ENCODE measurements at regions of chr9 and their contacts with region 1.

Region 1: GRCh38 chr9:112074250-112075008 is 100.7 kb downstream of the SUSD1 start:
- DNase-seq: peak; percentile 74 to 77 (median 75)
- H3K4me3 ChIP-seq: no peak overlapping the region
- H3K4me3 Mint-ChIP-seq: peak overlapping the region; percentile 51 to 82 (median 74)
- H3K27ac ChIP-seq: no peak overlapping the region
- H3K27ac Mint-ChIP-seq: peak overlapping the region; percentile 20 to 82 (median 46)
- H3K4me1 ChIP-seq: peaks cover 26% of the 10 kb centered on the region
- H3K4me1 Mint-ChIP-seq: peaks cover 23 to 41% (median 29%) of the 10 kb centered on the region in 4 donors
- H3K27me3 ChIP-seq: no peaks in the 10 kb centered on the region
- H3K27me3 Mint-ChIP-seq: no peaks in the 10 kb centered on the region

Region 2: DNA sequence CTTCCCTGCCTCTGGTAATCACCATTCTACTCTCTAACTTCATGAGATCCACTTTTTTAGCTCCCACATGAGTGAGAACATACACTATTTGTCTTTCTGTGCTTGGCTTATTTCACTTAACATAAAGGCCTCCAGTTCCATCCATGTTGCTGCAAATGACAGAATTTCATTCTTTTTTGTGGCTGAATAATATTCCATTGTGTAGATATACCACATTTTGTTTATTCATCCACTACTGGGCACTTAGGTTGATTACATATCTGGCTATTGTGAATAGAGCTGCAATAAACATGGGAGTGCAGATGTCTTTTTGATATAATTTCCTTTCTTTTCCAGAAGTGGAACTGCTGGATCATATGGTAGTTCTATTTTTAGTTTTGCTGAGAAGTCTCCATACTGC is 308.4 kb before region 1 on chr9:
- CTCF ChIA-PET with region 1: interaction called, 216 read pairs
- POLR2A ChIA-PET with region 1: interaction called, 7 read pairs
- intact Hi-C with region 1: no loop called
- DNase-seq: no peak
- H3K4me3 ChIP-seq: no peak overlapping the region
- H3K4me3 Mint-ChIP-seq: no peak overlapping the region
- H3K27ac ChIP-seq: no peak overlapping the region
- H3K27ac Mint-ChIP-seq: peak overlapping the region in 1 of 7 donors; percentile 25
- H3K4me1 ChIP-seq: no peaks in the 10 kb centered on the region
- H3K4me1 Mint-ChIP-seq: no peaks in the 10 kb centered on the region
- H3K27me3 ChIP-seq: no peaks in the 10 kb centered on the region
- H3K27me3 Mint-ChIP-seq: no peaks in the 10 kb centered on the region

Region 3: DNA sequence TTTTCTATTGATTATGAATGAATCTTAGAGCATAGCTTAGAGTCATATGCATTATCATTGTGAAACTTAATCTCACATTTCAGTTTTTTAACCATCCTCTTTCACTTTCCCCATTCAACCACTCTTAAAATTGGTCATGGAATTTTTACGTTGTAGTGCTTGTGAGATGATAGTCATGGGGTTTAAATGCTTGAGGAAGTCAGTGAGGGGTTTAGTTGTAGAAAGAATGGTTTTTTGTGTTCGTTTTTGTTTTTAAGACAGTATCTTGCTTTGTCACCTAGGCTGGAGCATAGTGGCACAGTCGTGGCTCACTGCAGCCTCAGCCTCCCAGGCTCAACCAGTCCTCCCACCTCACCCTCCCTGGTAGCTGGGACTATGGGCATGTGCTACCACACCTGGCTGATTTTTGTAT is 158.2 kb before region 1 on chr9:
- CTCF ChIA-PET with region 1: interaction called, 12 read pairs
- POLR2A ChIA-PET with region 1: no interaction called
- intact Hi-C with region 1: no loop called
- DNase-seq: no peak
- H3K4me3 ChIP-seq: no peak overlapping the region
- H3K4me3 Mint-ChIP-seq: peak overlapping the region in 7 of 8 donors; percentile 60 to 84 (median 77)
- H3K27ac ChIP-seq: no peak overlapping the region
- H3K27ac Mint-ChIP-seq: peak overlapping the region in 5 of 7 donors; percentile 57 to 86 (median 77)
- H3K4me1 ChIP-seq: peaks cover 52% of the 10 kb centered on the region
- H3K4me1 Mint-ChIP-seq: peaks cover 41 to 71% (median 55%) of the 10 kb centered on the region in 4 donors
- H3K27me3 ChIP-seq: no peaks in the 10 kb centered on the region
- H3K27me3 Mint-ChIP-seq: no peaks in the 10 kb centered on the region

Region 4: DNA sequence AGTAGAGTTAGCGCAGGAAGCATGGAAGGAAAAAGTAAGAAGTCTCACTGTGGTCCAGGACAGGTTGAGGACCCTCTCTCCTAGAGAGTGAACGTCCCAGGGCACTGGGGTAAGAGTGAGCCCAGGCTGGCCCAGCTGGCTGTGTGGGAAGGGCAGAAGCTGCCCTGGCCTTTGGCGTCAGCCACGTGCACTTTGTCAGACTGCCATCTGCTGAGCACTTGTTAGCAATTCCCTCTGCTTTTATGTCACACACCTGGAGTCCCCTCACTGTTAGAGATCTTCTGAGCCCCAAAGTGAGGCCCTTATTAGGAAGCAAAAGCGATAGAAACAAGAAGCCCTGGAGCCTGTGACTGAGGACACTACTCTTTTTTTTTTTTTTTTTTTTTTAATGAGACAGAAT is 98.7 kb before region 1 on chr9:
- CTCF ChIA-PET with region 1: interaction called, 22 read pairs
- POLR2A ChIA-PET with region 1: no interaction called
- intact Hi-C with region 1: no loop called
- DNase-seq: no peak
- H3K4me3 ChIP-seq: no peak overlapping the region
- H3K4me3 Mint-ChIP-seq: no peak overlapping the region
- H3K27ac ChIP-seq: no peak overlapping the region
- H3K27ac Mint-ChIP-seq: peak overlapping the region in 1 of 7 donors; percentile 52
- H3K4me1 ChIP-seq: no peaks in the 10 kb centered on the region
- H3K4me1 Mint-ChIP-seq: peaks cover 0 to 10% (median 6%) of the 10 kb centered on the region in 4 donors
- H3K27me3 ChIP-seq: no peaks in the 10 kb centered on the region
- H3K27me3 Mint-ChIP-seq: no peaks in the 10 kb centered on the region

Region 5: DNA sequence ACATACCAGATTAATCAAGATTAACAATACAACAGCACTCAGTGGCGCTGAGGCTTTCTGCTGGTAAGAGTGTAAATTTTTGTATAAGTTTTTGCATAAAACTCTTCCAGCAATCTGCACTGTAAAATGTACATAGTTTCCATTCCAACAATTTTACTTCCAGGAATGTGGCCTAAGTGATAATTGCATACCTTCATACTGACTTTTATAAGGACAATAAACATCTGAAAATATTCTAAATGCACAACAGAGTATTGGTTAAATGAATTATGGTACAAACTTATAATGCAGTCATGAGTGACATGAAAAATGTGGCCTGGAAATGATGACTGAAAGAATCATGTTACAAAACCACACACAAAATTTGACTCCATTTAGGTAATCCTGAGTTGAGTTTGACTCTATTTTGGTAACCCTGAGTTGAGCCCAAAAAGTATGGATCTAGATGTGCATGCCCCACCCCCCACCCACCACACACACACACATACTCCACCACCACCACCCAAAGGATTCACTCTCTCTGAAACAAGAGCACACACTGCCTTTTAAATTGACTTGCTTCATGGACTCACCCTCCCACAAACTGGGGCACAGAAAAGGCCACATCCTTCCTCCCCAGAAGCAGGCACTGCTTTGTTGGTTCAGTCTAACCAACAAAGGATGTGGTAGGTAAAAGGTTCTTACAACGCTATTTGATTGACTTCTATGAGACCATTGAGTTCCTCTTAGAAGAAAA is 37.0 kb before region 1 on chr9:
- CTCF ChIA-PET with region 1: interaction called, 14 read pairs
- POLR2A ChIA-PET with region 1: interaction called, 3 read pairs
- intact Hi-C with region 1: no loop called
- DNase-seq: peak; percentile 83 to 90 (median 84)
- H3K4me3 ChIP-seq: peak overlapping the region in 1 of 2 donors; percentile 28
- H3K4me3 Mint-ChIP-seq: peak overlapping the region; percentile 46 to 90 (median 68)
- H3K27ac ChIP-seq: no peak overlapping the region
- H3K27ac Mint-ChIP-seq: peak overlapping the region in 6 of 7 donors; percentile 31 to 90 (median 72)
- H3K4me1 ChIP-seq: peaks cover 56% of the 10 kb centered on the region
- H3K4me1 Mint-ChIP-seq: peaks cover 36 to 73% (median 52%) of the 10 kb centered on the region in 4 donors
- H3K27me3 ChIP-seq: no peaks in the 10 kb centered on the region
- H3K27me3 Mint-ChIP-seq: no peaks in the 10 kb centered on the region

Region 6: DNA sequence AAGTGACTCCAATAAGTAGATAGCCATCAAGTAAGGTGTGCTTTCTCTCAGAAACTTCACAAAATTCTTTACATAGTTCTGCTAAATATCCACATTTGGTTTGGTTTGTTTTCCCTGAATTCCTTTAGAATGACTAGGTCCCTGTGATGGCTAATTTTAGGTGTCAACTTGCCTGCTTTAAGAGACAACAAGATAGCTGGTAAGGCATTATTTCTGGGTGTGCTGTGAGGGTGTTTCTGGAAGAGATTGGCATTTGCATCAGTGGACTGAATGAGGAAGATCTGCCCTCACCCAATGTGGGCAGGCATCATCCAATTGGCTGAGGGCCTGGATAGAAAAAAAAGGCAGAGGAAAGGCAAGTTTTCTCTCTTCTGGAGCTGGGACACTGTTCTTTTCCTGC is 267.3 kb after region 1 on chr9:
- CTCF ChIA-PET with region 1: no interaction called
- POLR2A ChIA-PET with region 1: no interaction called
- intact Hi-C with region 1: no loop called
- DNase-seq: no peak
- H3K4me3 ChIP-seq: no peak overlapping the region
- H3K4me3 Mint-ChIP-seq: no peak overlapping the region
- H3K27ac ChIP-seq: no peak overlapping the region
- H3K27ac Mint-ChIP-seq: no peak overlapping the region
- H3K4me1 ChIP-seq: no peaks in the 10 kb centered on the region
- H3K4me1 Mint-ChIP-seq: no peaks in the 10 kb centered on the region
- H3K27me3 ChIP-seq: no peaks in the 10 kb centered on the region
- H3K27me3 Mint-ChIP-seq: peaks cover 0 to 2% of the 10 kb centered on the region in 2 donors